ENCODE measurements at regions of chr5 and their contacts with region 1.

Region 1: GRCh38 chr5:17282283-17283120 is 65.1 kb downstream of the BASP1 start:
- DNase-seq: peak; percentile 52
- ATAC-seq: peak; percentile 76
- H3K4me3 Mint-ChIP-seq: peak overlapping the region; percentile 81
- H3K27ac Mint-ChIP-seq: peak overlapping the region; percentile 95
- H3K4me1 Mint-ChIP-seq: peaks cover 71% of the 10 kb centered on the region
- H3K27me3 Mint-ChIP-seq: no peaks in the 10 kb centered on the region
- CTCF ChIP-seq: no peak

Region 2: GRCh38 chr5:17255471-17256021 is 27.0 kb before region 1 on chr5:
- CTCF ChIA-PET with region 1: interaction called, 6 read pairs
- POLR2A ChIA-PET with region 1: interaction called, 84 read pairs
- intact Hi-C with region 1: loop called (anchors 1 kb)
- DNase-seq: no peak
- ATAC-seq: peak; percentile 43
- H3K4me3 Mint-ChIP-seq: peak overlapping the region; percentile 44
- H3K27ac Mint-ChIP-seq: peak overlapping the region; percentile 95
- H3K4me1 Mint-ChIP-seq: peaks cover 93% of the 10 kb centered on the region
- H3K27me3 Mint-ChIP-seq: no peaks in the 10 kb centered on the region
- CTCF ChIP-seq: no peak

Region 3: DNA sequence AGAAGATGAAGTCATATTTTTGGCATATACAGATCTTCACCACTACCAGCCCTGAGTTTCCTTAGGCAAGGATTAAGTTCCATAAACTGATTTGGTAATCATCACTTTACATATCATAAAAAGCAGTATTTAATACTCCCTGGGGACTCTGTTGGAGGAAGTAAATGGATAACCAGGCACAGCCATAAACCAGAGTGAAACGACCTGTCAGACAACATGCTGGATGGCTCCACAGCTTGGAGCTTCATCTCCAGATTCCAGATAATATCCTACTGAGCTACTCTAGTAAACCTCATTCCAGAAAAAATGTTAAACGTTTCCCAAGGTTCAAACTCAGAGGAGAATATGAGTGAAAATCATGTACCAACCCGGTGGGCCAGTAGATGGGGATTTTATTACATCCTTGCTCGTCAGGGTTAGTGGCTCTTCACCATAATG is 44.1 kb after region 1 on chr5:
- CTCF ChIA-PET with region 1: no interaction called
- POLR2A ChIA-PET with region 1: interaction called, 14 read pairs
- intact Hi-C with region 1: no loop called
- DNase-seq: no peak
- ATAC-seq: no peak
- H3K4me3 Mint-ChIP-seq: no peak overlapping the region
- H3K27ac Mint-ChIP-seq: no peak overlapping the region
- H3K4me1 Mint-ChIP-seq: no peaks in the 10 kb centered on the region
- H3K27me3 Mint-ChIP-seq: no peaks in the 10 kb centered on the region
- CTCF ChIP-seq: no peak

Region 4: DNA sequence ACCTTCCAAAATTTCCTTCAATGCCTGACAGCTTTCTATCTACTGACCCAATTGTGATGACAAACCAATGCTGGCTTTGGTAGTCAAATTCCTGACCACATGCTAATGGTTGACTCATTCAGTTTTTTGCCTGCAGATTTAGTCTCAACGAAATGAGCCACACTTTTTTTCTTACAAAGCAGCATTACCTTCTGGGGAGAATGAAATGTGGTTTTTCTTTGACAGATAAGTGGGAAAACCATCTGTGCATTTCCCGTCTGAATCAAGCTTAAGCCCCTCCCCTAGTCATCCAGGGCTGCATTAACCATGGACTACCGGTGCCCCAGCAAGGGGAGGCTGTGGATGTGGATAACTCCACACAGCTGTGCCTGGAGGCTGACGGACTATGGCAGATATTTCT is 115.9 kb after region 1 on chr5:
- CTCF ChIA-PET with region 1: no interaction called
- POLR2A ChIA-PET with region 1: interaction called, 13 read pairs
- intact Hi-C with region 1: loop called (anchors 2 kb)
- DNase-seq: no peak
- ATAC-seq: peak; percentile 64
- H3K4me3 Mint-ChIP-seq: peak overlapping the region; percentile 44
- H3K27ac Mint-ChIP-seq: peak overlapping the region; percentile 60
- H3K4me1 Mint-ChIP-seq: peaks cover 45% of the 10 kb centered on the region
- H3K27me3 Mint-ChIP-seq: no peaks in the 10 kb centered on the region
- CTCF ChIP-seq: no peak

Measured in activated B cell treated with CpG ODN at 0.5 μM for 24 hours (primary cell).